Caco-2 (cell line): ENCODE measurements at regions of chr20 and their contacts with region 1.

Region 1: DNA sequence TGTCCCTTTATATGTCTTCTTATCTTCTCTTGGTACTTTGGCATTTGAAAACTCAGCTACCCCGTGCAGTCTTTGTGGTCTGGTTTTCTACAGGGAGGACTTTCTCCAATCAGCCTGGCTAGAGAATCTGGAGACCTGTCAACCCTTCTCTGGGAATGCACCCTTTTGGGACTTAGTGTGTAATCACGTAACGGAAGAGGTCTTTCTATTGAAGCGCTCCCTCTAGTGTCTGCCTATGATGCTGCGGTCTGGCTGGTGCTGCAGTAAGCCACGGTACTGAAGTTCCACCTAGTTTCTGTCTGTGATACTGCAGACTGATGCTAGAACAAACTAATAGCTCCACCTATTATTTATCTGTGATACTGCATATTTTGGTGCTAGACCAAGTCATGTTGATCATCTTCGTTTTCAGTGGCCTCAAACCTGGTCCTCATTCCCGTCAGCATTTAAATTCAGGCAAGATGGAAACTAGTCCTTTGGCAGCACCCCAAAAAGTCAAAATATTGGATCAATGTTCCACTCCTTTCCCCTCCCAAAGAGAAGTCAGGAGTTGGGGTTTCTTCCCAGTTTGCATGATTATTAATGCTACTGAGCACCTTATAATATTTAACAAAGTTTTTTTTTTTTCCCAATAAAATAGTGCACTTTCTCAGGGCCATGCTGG is 12.5 kb upstream of the SIRPB2 start:
- DNase-seq: peak; percentile 88
- H3K4me3 ChIP-seq: no peak overlapping the region
- H3K4me3 Mint-ChIP-seq: no peak overlapping the region
- H3K27ac Mint-ChIP-seq: no peak overlapping the region
- H3K4me1 ChIP-seq: peaks cover 14% of the 10 kb centered on the region
- H3K4me1 Mint-ChIP-seq: peaks cover 18% of the 10 kb centered on the region
- H3K27me3 ChIP-seq: no peaks in the 10 kb centered on the region
- H3K27me3 Mint-ChIP-seq: peaks cover 12% of the 10 kb centered on the region
- CTCF ChIP-seq: peak; percentile 92 to 99

Region 2: DNA sequence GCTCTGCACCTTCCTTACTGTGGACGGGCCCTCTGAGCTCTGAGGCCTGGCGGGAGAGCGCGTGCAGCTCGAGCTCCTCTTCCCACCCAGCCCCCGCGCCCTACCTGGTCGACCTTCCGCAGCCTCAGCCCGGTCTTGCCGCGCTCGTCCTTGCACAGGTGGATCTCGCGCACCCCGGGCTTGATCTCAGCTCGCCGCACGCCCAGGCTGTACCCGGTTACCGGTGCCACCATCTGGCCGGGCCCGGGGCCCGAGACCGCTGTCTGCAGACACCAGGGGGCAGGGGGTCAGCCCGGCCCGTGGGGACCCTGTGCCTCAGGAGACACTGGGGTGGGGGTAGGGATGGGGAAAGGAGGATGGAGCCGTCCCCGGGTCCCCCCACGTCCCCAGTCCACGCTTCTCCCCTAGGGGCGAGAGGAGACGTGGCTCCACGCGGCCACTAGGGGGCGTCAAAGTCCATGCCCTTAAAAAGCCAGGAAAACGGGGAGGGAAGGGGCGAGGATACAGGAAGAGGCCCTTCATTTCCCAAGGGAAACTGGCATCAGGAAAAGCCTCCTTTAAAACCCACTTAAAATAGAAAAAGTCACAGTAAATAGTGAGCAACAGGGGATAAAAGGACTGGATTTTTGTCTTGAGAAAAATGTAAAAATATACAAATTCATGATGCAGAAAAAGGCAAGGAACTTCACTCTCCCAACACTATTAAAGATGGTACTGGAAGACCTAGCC is 190.3 kb before region 1 on chr20:
- CTCF ChIA-PET with region 1: interaction called, 4 read pairs
- POLR2A ChIA-PET with region 1: no interaction called
- intact Hi-C with region 1: loop called (anchors 1 kb)
- DNase-seq: peak; percentile 63 to 75
- H3K4me3 ChIP-seq: no peak overlapping the region
- H3K4me3 Mint-ChIP-seq: no peak overlapping the region
- H3K27ac Mint-ChIP-seq: no peak overlapping the region
- H3K4me1 ChIP-seq: no peaks in the 10 kb centered on the region
- H3K4me1 Mint-ChIP-seq: no peaks in the 10 kb centered on the region
- H3K27me3 ChIP-seq: no peaks in the 10 kb centered on the region
- H3K27me3 Mint-ChIP-seq: no peaks in the 10 kb centered on the region
- CTCF ChIP-seq: peak; percentile 92 to 93

Region 3: DNA sequence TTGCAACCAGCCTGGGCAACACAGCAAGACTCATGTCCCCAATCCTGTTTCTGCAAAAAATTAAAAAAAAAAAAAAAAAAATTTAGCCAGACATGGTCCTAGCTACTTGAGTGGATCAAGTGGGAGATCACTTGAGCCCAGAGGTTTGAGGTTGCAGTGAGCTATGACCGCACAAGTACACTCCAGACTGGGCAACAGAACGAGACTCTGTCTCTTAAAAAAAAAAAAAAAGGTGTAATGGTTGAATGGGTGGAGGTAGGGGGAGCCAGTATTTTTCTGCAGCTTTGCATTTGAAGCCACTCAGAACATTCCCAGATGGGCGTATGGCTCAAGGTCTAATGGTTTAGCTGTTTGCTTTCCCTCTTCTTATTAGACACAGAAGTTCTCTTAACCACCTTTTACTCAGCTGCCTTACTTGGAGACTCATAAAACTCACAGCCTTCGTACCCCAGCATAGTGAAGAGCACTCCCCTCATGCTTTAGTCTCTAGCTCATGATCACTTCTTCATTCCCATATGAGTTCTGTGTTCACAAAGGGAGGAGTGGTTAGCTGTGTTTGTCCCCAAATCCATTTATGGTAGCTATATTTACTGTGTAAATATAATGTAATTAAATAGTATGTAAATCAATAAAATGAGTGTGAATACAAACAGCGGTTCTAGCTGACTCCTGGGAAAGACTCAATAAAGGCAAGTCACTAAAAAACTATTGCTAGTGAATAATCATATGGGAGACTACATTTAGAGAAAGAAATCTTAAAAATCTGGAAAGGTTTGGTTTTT is 119.9 kb before region 1 on chr20:
- CTCF ChIA-PET with region 1: interaction called, 11 read pairs
- POLR2A ChIA-PET with region 1: no interaction called
- intact Hi-C with region 1: no loop called
- DNase-seq: no peak
- H3K4me3 ChIP-seq: no peak overlapping the region
- H3K4me3 Mint-ChIP-seq: no peak overlapping the region
- H3K27ac Mint-ChIP-seq: no peak overlapping the region
- H3K4me1 ChIP-seq: peaks cover 15% of the 10 kb centered on the region
- H3K4me1 Mint-ChIP-seq: peaks cover 14% of the 10 kb centered on the region
- H3K27me3 ChIP-seq: no peaks in the 10 kb centered on the region
- H3K27me3 Mint-ChIP-seq: no peaks in the 10 kb centered on the region
- CTCF ChIP-seq: no peak

Region 4: GRCh38 chr20:1776681-1777475 is 273.2 kb after region 1 on chr20:
- CTCF ChIA-PET with region 1: interaction called, 18 read pairs
- POLR2A ChIA-PET with region 1: no interaction called
- intact Hi-C with region 1: no loop called
- DNase-seq: peak; percentile 88 to 94
- H3K4me3 ChIP-seq: peak overlapping the region; percentile 47
- H3K4me3 Mint-ChIP-seq: peak overlapping the region; percentile 69
- H3K27ac Mint-ChIP-seq: peak overlapping the region; percentile 51
- H3K4me1 ChIP-seq: peaks cover 18% of the 10 kb centered on the region; the same call in 1 of the 2 replicates
- H3K4me1 Mint-ChIP-seq: peaks cover 21% of the 10 kb centered on the region
- H3K27me3 ChIP-seq: no peaks in the 10 kb centered on the region
- H3K27me3 Mint-ChIP-seq: peaks cover 6% of the 10 kb centered on the region
- CTCF ChIP-seq: peak; percentile 82 to 90